IMR-90 (cell line): ENCODE measurements at regions of chr1 and their contacts with region 1.

Region 1: GRCh38 chr1:224106568-224107281 is 7.2 kb upstream of the FBXO28 start:
- DNase-seq: peak; percentile 56
- ATAC-seq: peak; percentile 97
- H3K4me3 ChIP-seq: no peak overlapping the region
- H3K27ac ChIP-seq: no peak overlapping the region
- H3K4me1 ChIP-seq: no peaks in the 10 kb centered on the region
- H3K27me3 ChIP-seq: no peaks in the 10 kb centered on the region; the same call in 1 of the 2 replicates
- CTCF ChIP-seq: peak; percentile 57
- POLR2A ChIP-seq: no peak
- RAD21 ChIP-seq: peak; percentile 59

Region 2: GRCh38 chr1:223531742-223532341 is 574.9 kb before region 1 on chr1:
- CTCF ChIA-PET with region 1: no interaction called
- POLR2A ChIA-PET with region 1: no interaction called
- dilution Hi-C with region 1: no loop called
- in situ Hi-C with region 1: no loop called
- intact Hi-C with region 1: no loop called
- DNase-seq: peak; percentile 19
- ATAC-seq: no peak
- H3K4me3 ChIP-seq: no peak overlapping the region
- H3K27ac ChIP-seq: no peak overlapping the region
- H3K4me1 ChIP-seq: no peaks in the 10 kb centered on the region
- H3K27me3 ChIP-seq: peaks cover 7% of the 10 kb centered on the region
- CTCF ChIP-seq: peak; percentile 53
- POLR2A ChIP-seq: no peak
- RAD21 ChIP-seq: peak; percentile 54

Region 3: GRCh38 chr1:223695941-223696340 is 410.8 kb before region 1 on chr1:
- CTCF ChIA-PET with region 1: no interaction called
- POLR2A ChIA-PET with region 1: no interaction called
- dilution Hi-C with region 1: no loop called
- in situ Hi-C with region 1: loop called (anchors 10 kb)
- intact Hi-C with region 1: loop called (anchors 5 kb)
- DNase-seq: no peak
- ATAC-seq: no peak
- H3K4me3 ChIP-seq: no peak overlapping the region
- H3K27ac ChIP-seq: no peak overlapping the region
- H3K4me1 ChIP-seq: peaks cover 14% of the 10 kb centered on the region
- H3K27me3 ChIP-seq: no peaks in the 10 kb centered on the region
- CTCF ChIP-seq: no peak
- POLR2A ChIP-seq: no peak
- RAD21 ChIP-seq: no peak

Region 4: GRCh38 chr1:224132901-224133300 is 26.2 kb after region 1 on chr1:
- CTCF ChIA-PET with region 1: no interaction called
- POLR2A ChIA-PET with region 1: no interaction called
- dilution Hi-C with region 1: no loop called
- in situ Hi-C with region 1: no loop called
- intact Hi-C with region 1: no loop called
- DNase-seq: no peak
- ATAC-seq: no peak
- H3K4me3 ChIP-seq: no peak overlapping the region
- H3K27ac ChIP-seq: no peak overlapping the region
- H3K4me1 ChIP-seq: peaks cover 6% of the 10 kb centered on the region
- H3K27me3 ChIP-seq: no peaks in the 10 kb centered on the region
- CTCF ChIP-seq: no peak
- POLR2A ChIP-seq: no peak
- RAD21 ChIP-seq: no peak

Region 5: GRCh38 chr1:224348137-224348536 is 241.4 kb after region 1 on chr1:
- CTCF ChIA-PET with region 1: no interaction called
- POLR2A ChIA-PET with region 1: no interaction called
- dilution Hi-C with region 1: no loop called
- in situ Hi-C with region 1: no loop called
- intact Hi-C with region 1: no loop called
- DNase-seq: no peak
- ATAC-seq: no peak
- H3K4me3 ChIP-seq: no peak overlapping the region
- H3K27ac ChIP-seq: no peak overlapping the region
- H3K4me1 ChIP-seq: no peaks in the 10 kb centered on the region
- H3K27me3 ChIP-seq: no peaks in the 10 kb centered on the region
- CTCF ChIP-seq: no peak
- POLR2A ChIP-seq: no peak
- RAD21 ChIP-seq: no peak